ENCODE measurements at regions of chr14 and their contacts with region 1.

Region 1: GRCh38 chr14:63641473-63642228 is at the start of gene WDR89:
- DNase-seq: peak; percentile 99
- ATAC-seq: peak; percentile 93
- H3K4me3 ChIP-seq: peak within 1 kb of the TSS; percentile 94
- H3K27ac ChIP-seq: peak within 1 kb of the TSS; percentile 89
- H3K4me1 ChIP-seq: peaks cover 16% of the 10 kb centered on the region
- H3K27me3 ChIP-seq: no peaks in the 10 kb centered on the region
- CTCF ChIP-seq: peak; percentile 76
- total RNA-seq, gene WDR89: 12.1 and 19.0 TPM in 2 replicates

Region 2: GRCh38 chr14:63437953-63438757 is 203.5 kb before region 1 on chr14:
- CTCF ChIA-PET with region 1: no interaction called
- POLR2A ChIA-PET with region 1: interaction called, 12 read pairs
- intact Hi-C with region 1: loop called (anchors 5 kb)
- DNase-seq: peak; percentile 98
- ATAC-seq: peak; percentile 96
- H3K4me3 ChIP-seq: peak overlapping the region; percentile 56
- H3K27ac ChIP-seq: peak overlapping the region; percentile 80
- H3K4me1 ChIP-seq: peaks cover 40% of the 10 kb centered on the region
- H3K27me3 ChIP-seq: no peaks in the 10 kb centered on the region
- CTCF ChIP-seq: peak; percentile 56

Region 3: DNA sequence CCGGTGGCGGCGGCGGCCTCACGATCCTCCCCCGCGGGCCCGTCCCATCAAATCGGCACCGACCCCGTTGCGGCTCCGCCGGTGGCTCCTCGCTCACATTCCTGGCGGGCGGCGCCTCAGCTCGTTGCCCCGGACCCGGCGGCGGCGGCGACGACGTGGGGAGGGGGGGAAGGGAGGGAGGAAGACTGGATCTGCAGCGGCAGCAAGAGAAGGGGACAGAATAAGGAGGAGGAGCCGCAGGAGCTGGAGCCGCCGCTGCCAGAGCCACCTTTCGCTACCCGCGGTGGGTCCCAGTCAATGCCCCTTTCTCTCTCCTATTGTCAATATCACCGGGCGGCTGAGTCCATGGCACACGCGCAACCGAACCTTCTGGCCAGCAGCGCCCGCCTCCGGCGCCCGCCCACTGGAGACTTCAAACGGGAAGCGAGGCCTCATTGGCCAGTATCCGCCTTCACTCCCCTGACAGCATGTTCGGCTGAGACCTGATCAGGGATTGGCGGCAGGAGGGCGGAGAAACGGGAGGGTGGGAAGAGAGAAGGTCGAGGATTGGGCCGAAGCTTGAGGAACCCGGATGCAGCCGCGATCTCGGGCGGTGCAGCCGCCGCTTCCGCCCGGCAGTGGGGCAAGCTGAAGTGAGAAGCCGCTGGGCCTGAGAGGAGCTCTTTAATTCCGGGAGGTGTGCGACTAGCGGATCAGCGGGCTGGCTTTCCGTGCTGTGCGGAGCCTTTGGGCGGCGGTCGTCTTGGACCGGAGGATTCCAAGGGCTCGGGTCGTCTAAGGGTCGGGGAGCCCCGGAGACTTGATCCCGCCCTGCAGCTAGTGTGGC is 98.4 kb before region 1 on chr14 and contains the start of gene PPP2R5E:
- CTCF ChIA-PET with region 1: interaction called, 3 read pairs
- POLR2A ChIA-PET with region 1: interaction called, 3 read pairs
- intact Hi-C with region 1: loop called (anchors 2 kb)
- DNase-seq: peak; percentile 99
- ATAC-seq: peak; percentile 94
- H3K4me3 ChIP-seq: peak within 1 kb of the TSS; percentile 90
- H3K27ac ChIP-seq: peak within 1 kb of the TSS; percentile 61
- H3K4me1 ChIP-seq: peaks cover 19% of the 10 kb centered on the region
- H3K27me3 ChIP-seq: no peaks in the 10 kb centered on the region
- CTCF ChIP-seq: no peak
- total RNA-seq, gene PPP2R5E: 17.2 and 26.4 TPM in 2 replicates

Region 4: GRCh38 chr14:63598807-63599206 is 42.8 kb before region 1 on chr14:
- CTCF ChIA-PET with region 1: no interaction called
- POLR2A ChIA-PET with region 1: no interaction called
- intact Hi-C with region 1: no loop called
- DNase-seq: no peak
- ATAC-seq: no peak
- H3K4me3 ChIP-seq: no peak overlapping the region
- H3K27ac ChIP-seq: no peak overlapping the region
- H3K4me1 ChIP-seq: no peaks in the 10 kb centered on the region
- H3K27me3 ChIP-seq: no peaks in the 10 kb centered on the region
- CTCF ChIP-seq: no peak

Region 5: GRCh38 chr14:63677821-63678380 is 36.2 kb after region 1 on chr14:
- CTCF ChIA-PET with region 1: interaction called, 3 read pairs
- POLR2A ChIA-PET with region 1: interaction called, 18 read pairs
- intact Hi-C with region 1: loop called (anchors 1 kb)
- DNase-seq: peak; percentile 96
- ATAC-seq: peak; percentile 92
- H3K4me3 ChIP-seq: peak overlapping the region; percentile 28
- H3K27ac ChIP-seq: peak overlapping the region; percentile 94
- H3K4me1 ChIP-seq: peaks cover 23% of the 10 kb centered on the region
- H3K27me3 ChIP-seq: no peaks in the 10 kb centered on the region
- CTCF ChIP-seq: no peak

Region 6: GRCh38 chr14:63701606-63702299 is 60.1 kb after region 1 on chr14:
- CTCF ChIA-PET with region 1: no interaction called
- POLR2A ChIA-PET with region 1: no interaction called
- intact Hi-C with region 1: no loop called
- DNase-seq: no peak
- ATAC-seq: no peak
- H3K4me3 ChIP-seq: no peak overlapping the region
- H3K27ac ChIP-seq: no peak overlapping the region
- H3K4me1 ChIP-seq: no peaks in the 10 kb centered on the region
- H3K27me3 ChIP-seq: no peaks in the 10 kb centered on the region
- CTCF ChIP-seq: no peak

Region 7: DNA sequence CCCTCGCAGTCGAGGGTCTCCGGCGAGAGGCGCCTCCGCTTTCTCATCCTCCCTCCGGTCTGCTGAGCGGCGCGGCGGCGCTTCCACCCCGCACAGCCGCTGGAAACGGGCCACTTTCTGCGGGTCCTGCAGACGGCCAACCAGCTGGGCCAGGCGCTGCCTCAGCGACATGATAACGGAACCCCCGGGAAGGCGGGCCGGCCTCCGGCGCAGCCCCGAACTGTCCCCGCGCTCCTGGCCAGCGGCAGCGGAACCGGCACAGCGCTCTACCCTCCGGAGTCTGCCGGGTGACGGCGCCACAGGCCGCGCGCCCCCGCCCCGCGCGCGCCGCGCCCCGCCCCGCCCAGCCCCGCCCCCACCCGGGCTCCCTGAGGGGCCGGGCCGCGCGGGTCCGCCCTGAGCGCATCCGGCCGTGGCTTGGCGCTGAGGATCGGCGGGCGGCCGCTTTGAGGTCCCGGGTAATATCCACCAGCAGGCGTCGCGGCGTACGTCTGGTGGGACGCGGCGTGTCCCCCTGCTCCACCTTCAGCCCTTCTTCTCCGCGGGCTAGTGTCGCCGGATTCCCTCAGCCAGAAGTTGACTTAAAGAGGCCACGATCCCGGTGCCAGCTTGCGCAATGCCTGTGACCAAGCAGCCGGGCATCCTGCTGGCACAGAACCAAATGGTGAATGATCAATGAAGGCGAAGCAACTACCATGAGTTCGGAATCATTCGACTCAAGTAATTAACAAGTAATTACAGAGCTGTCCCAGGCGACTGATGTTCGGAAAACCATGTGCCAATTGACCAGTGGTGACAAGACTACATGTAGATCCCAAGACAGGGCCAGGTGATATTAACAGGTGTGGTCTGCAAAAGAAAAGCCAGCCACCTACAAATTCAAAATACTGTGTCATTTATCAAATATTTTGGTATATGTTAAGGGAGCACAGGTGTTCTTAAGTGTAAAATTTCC is 86.4 kb after region 1 on chr14 and contains the start of gene SGPP1:
- CTCF ChIA-PET with region 1: interaction called, 5 read pairs
- POLR2A ChIA-PET with region 1: interaction called, 31 read pairs
- intact Hi-C with region 1: loop called (anchors 1 kb)
- DNase-seq: peak; percentile 84
- ATAC-seq: peak; percentile 91
- H3K4me3 ChIP-seq: peak within 1 kb of the TSS; percentile 84
- H3K27ac ChIP-seq: peak within 1 kb of the TSS; percentile 58
- H3K4me1 ChIP-seq: peaks cover 20% of the 10 kb centered on the region
- H3K27me3 ChIP-seq: no peaks in the 10 kb centered on the region
- CTCF ChIP-seq: peak; percentile 32; the same call in 1 of the 2 replicates
- total RNA-seq, gene SGPP1: 15.9 and 19.3 TPM in 2 replicates

Region 8: GRCh38 chr14:63770187-63770807 is 128.6 kb after region 1 on chr14:
- CTCF ChIA-PET with region 1: interaction called, 26 read pairs
- POLR2A ChIA-PET with region 1: interaction called, 7 read pairs
- intact Hi-C with region 1: loop called (anchors 1 kb)
- DNase-seq: peak; percentile 79
- ATAC-seq: peak; percentile 99
- H3K4me3 ChIP-seq: no peak overlapping the region
- H3K27ac ChIP-seq: no peak overlapping the region
- H3K4me1 ChIP-seq: no peaks in the 10 kb centered on the region
- H3K27me3 ChIP-seq: no peaks in the 10 kb centered on the region
- CTCF ChIP-seq: peak; percentile 90

Region 9: DNA sequence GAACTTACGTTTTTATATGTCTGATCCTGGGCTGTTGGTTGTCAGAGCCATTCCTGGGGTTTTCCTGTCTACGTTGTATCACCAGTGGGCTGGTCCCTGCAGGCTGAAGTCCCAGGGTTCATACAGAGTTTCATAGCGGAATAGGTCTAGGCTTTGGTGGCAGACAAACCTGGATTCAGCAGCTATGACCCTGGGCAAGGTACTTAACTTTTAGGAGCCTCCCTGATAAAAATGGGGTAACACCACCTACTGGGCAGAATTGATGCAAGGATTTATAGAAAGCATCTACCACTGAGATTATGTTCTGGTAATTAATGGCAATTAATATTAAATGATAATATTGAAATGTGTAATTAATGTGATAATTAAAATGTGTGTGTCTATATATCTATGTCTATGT is 352.3 kb after region 1 on chr14:
- CTCF ChIA-PET with region 1: no interaction called
- POLR2A ChIA-PET with region 1: no interaction called
- intact Hi-C with region 1: loop called (anchors 5 kb)
- DNase-seq: peak; percentile 17
- ATAC-seq: peak; percentile 81
- H3K4me3 ChIP-seq: no peak overlapping the region
- H3K27ac ChIP-seq: no peak overlapping the region
- H3K4me1 ChIP-seq: no peaks in the 10 kb centered on the region
- H3K27me3 ChIP-seq: no peaks in the 10 kb centered on the region
- CTCF ChIP-seq: peak; percentile 54

Measured in PC-3 (cell line).